Left colon (tissue), 2 donors: ENCODE measurements at regions of chr4 and their contacts with region 1.

Region 1: GRCh38 chr4:170047771-170048354 is 21.7 kb upstream of the MFAP3L start:
- DNase-seq: peak in 1 of 2 donors; percentile 72
- ATAC-seq: peak; percentile 30

Region 2: DNA sequence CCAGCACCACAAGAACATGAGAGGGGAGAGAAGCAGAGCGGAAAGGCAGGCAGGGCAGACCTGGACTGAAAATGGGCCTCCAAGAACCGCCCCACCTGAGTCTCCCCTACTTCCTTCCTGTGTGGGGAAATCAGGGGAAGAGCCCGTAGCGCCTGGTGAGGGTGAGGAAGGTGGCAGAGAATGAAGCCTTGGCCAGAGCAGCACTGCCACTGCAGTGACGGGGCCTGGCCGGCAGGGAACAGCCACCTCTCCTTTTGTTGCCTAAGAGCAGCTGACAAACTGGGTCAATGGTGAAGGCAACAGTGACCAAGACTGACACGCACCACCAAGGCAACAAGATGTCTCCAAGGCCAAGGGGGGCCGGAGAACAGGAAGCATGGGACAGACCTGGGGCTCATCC is 979.4 kb before region 1 on chr4:
- intact Hi-C with region 1: no loop called
- DNase-seq: no peak
- ATAC-seq: no peak

Region 3: GRCh38 chr4:169810325-169811323 is 237.2 kb before region 1 on chr4:
- intact Hi-C with region 1: loop called (anchors 5 to 10 kb)
- DNase-seq: no peak
- ATAC-seq: peak; percentile 66